IMR-90 (cell line): ENCODE measurements at regions of chr1 and their contacts with region 1.

Region 1: DNA sequence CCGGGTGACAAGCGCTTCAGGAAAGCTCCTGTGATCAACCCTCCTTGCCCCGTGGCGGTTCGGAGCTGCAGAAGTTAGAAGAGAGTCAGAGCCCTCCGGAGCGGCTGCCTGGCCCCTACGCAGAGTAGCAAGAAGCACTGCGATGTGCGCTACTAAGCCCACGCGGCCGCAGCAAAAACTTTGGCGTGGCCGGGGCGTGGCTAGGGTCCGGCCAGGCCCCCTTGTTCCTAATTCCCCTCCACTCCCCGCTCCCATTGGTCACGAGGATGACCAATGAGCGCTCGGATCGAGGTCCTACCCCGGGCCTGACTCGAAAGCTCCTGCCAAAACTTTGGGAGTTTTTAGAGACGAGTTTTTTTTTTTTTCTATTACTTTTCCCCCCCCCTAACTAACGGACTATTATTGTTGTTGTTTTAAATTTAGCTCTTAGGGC is at the start of gene HLX:
- DNase-seq: peak; percentile 92
- ATAC-seq: peak; percentile 90
- H3K4me3 ChIP-seq: peak within 1 kb of the TSS; percentile 62
- H3K27ac ChIP-seq: peak within 1 kb of the TSS; percentile 83
- H3K4me1 ChIP-seq: peaks cover 9% of the 10 kb centered on the region
- H3K27me3 ChIP-seq: no peaks in the 10 kb centered on the region
- CTCF ChIP-seq: no peak
- POLR2A ChIP-seq: peak; percentile 59; the same call in 1 of the 2 replicates
- RAD21 ChIP-seq: no peak
- total RNA-seq, gene HLX: 3.9 and 4.3 TPM in 2 replicates

Region 2: GRCh38 chr1:220957233-220957605 is 78.1 kb after region 1 on chr1:
- CTCF ChIA-PET with region 1: no interaction called
- POLR2A ChIA-PET with region 1: interaction called, 4 read pairs
- dilution Hi-C with region 1: no loop called
- in situ Hi-C with region 1: no loop called
- intact Hi-C with region 1: loop called (anchors 5 kb)
- DNase-seq: peak; percentile 98
- ATAC-seq: peak; percentile 87
- H3K4me3 ChIP-seq: no peak overlapping the region
- H3K27ac ChIP-seq: peak overlapping the region; percentile 1; the same call in 1 of the 2 replicates
- H3K4me1 ChIP-seq: peaks cover 4% of the 10 kb centered on the region
- H3K27me3 ChIP-seq: no peaks in the 10 kb centered on the region
- CTCF ChIP-seq: no peak
- POLR2A ChIP-seq: no peak
- RAD21 ChIP-seq: peak; percentile 22; the same call in 1 of the 2 replicates

Region 3: DNA sequence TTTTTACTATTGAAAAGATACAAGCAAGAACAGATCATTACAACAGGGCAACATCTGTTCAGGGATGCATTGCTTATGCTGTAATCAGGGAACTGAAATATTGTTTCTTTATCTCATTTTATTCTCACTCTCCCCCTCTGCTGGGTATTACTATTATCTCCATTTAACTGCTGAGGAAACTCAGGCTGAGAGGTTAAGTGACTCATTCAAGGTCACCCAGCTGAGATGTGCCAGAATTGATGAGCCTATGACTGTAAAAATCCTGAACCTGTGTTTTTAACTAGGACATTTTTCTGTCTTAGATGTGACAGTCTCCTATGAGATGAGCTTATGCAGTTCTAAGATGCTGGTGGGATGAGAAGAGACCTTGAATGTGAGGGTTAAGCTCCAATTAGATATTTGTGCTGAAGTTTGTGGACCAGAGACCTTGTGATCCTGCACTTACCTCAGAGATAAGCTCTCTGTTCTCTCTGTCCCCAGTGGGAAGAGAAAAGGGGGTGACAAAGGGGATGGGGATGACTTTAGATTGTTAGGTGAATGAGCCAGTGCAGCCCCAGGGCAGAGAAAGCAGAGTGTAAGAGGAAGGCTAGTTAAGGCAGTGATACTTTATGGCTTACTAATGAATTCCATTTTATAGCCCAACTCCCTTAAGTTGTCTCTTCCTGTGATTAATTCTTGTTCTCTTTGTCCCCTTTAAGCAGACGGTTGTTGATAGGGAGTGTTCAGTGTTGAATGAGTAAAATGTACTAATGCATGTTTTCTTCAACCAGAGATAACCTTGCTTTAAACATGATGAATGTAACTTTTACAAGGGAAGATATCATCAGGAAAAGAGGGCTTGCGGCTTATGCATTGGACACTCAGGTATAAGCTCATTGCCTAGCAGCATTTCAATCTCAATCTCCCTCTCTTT is 111.6 kb after region 1 on chr1:
- CTCF ChIA-PET with region 1: no interaction called
- POLR2A ChIA-PET with region 1: no interaction called
- dilution Hi-C with region 1: no loop called
- in situ Hi-C with region 1: no loop called
- intact Hi-C with region 1: loop called (anchors 2 kb)
- DNase-seq: peak; percentile 83
- ATAC-seq: peak; percentile 88
- H3K4me3 ChIP-seq: no peak overlapping the region
- H3K27ac ChIP-seq: no peak overlapping the region
- H3K4me1 ChIP-seq: peaks cover 2% of the 10 kb centered on the region
- H3K27me3 ChIP-seq: no peaks in the 10 kb centered on the region
- CTCF ChIP-seq: peak; percentile 38
- POLR2A ChIP-seq: no peak
- RAD21 ChIP-seq: peak; percentile 43

Region 4: GRCh38 chr1:221097479-221098383 is 218.6 kb after region 1 on chr1:
- CTCF ChIA-PET with region 1: interaction called, 3 read pairs
- POLR2A ChIA-PET with region 1: no interaction called
- dilution Hi-C with region 1: no loop called
- in situ Hi-C with region 1: loop called (anchors 10 kb)
- intact Hi-C with region 1: loop called (anchors 2 kb)
- DNase-seq: peak; percentile 88
- ATAC-seq: peak; percentile 72
- H3K4me3 ChIP-seq: no peak overlapping the region
- H3K27ac ChIP-seq: peak overlapping the region; percentile 3
- H3K4me1 ChIP-seq: peaks cover 17% of the 10 kb centered on the region
- H3K27me3 ChIP-seq: no peaks in the 10 kb centered on the region
- CTCF ChIP-seq: no peak
- POLR2A ChIP-seq: no peak
- RAD21 ChIP-seq: no peak

Region 5: GRCh38 chr1:221715321-221716169 is 836.5 kb after region 1 on chr1:
- CTCF ChIA-PET with region 1: no interaction called
- POLR2A ChIA-PET with region 1: no interaction called
- dilution Hi-C with region 1: no loop called
- in situ Hi-C with region 1: no loop called
- intact Hi-C with region 1: loop called (anchors 5 kb)
- DNase-seq: peak; percentile 77
- ATAC-seq: peak; percentile 28
- H3K4me3 ChIP-seq: no peak overlapping the region
- H3K27ac ChIP-seq: peak overlapping the region; percentile 90
- H3K4me1 ChIP-seq: peaks cover 57% of the 10 kb centered on the region
- H3K27me3 ChIP-seq: no peaks in the 10 kb centered on the region
- CTCF ChIP-seq: no peak
- POLR2A ChIP-seq: no peak
- RAD21 ChIP-seq: no peak